Endothelial cell of umbilical vein (primary cell): ENCODE measurements at regions of chr4 and their contacts with region 1.

Region 1: DNA sequence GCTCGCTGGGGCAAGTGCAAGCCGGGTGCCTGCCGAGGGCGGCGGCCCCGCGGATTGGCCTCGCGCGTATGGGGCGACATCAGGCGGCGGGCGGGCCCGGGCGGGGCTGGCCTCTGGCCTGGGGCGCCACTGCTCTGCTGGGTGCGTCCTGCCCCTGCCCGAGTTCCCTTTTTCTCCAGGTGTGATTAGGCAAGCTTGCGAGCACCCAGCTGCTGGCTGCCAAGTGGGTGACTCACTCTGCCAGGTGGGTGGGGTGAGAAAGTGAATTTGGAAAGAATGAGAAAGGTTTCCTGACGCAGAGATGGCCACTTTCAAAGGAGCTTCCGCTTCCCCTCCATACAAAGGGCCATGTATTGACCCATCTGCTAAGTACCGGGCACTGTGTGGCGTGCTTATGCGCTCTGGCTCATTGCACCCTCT is 32.5 kb downstream of the FGFBP1 start:
- DNase-seq: no peak
- H3K4me3 ChIP-seq: no peak overlapping the region
- H3K27ac ChIP-seq: no peak overlapping the region
- H3K4me1 ChIP-seq: no peaks in the 10 kb centered on the region
- H3K27me3 ChIP-seq: no peaks in the 10 kb centered on the region
- CTCF ChIP-seq: no peak
- POLR2A ChIP-seq: no peak

Region 2: DNA sequence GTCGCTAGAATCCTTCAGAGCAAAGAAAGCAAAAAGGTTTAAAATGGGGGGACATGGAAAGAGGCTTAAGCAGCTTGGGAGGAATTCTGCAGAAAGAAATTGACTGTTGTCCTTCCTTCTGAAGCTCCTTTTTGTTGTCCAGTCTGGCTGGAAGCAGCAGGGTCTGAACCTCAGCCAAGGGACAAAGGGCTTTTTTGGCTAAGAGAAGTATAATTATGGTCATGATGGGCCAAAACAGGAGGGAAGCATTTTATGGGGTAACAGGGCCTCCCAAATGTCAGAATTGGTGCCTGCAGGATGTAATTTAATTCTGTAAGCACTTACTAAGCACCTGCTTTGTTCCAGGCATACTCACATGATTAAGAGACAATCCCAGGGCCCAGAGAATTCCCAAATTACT is 978.0 kb before region 1 on chr4:
- CTCF ChIA-PET with region 1: no interaction called
- POLR2A ChIA-PET with region 1: no interaction called
- dilution Hi-C with region 1: no loop called
- intact Hi-C with region 1: no loop called
- DNase-seq: no peak
- H3K4me3 ChIP-seq: no peak overlapping the region
- H3K27ac ChIP-seq: no peak overlapping the region
- H3K4me1 ChIP-seq: no peaks in the 10 kb centered on the region
- H3K27me3 ChIP-seq: no peaks in the 10 kb centered on the region
- CTCF ChIP-seq: no peak
- POLR2A ChIP-seq: no peak

Region 3: DNA sequence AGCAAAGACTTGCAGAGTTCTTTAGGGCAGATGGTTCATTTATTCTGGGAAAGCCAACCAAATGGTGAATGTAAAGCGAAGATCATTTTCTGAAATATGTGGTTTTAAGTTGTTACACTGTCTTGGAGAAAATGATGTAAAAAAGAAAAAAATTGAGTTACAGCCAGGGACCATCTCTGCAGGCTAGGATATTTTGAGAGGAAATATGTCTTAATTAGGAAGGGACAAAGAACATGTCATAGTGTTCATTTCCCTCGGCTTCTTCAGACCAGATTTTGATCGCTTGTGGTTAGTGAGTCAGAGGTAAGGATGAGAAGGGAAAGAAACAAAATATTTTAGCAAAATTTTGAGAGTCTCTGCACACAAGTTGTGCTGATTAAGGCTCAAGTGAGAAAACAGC is 537.2 kb before region 1 on chr4:
- CTCF ChIA-PET with region 1: no interaction called
- POLR2A ChIA-PET with region 1: no interaction called
- dilution Hi-C with region 1: no loop called
- intact Hi-C with region 1: no loop called
- DNase-seq: no peak
- H3K4me3 ChIP-seq: no peak overlapping the region
- H3K27ac ChIP-seq: no peak overlapping the region
- H3K4me1 ChIP-seq: no peaks in the 10 kb centered on the region
- H3K27me3 ChIP-seq: no peaks in the 10 kb centered on the region
- CTCF ChIP-seq: no peak
- POLR2A ChIP-seq: no peak

Region 4: DNA sequence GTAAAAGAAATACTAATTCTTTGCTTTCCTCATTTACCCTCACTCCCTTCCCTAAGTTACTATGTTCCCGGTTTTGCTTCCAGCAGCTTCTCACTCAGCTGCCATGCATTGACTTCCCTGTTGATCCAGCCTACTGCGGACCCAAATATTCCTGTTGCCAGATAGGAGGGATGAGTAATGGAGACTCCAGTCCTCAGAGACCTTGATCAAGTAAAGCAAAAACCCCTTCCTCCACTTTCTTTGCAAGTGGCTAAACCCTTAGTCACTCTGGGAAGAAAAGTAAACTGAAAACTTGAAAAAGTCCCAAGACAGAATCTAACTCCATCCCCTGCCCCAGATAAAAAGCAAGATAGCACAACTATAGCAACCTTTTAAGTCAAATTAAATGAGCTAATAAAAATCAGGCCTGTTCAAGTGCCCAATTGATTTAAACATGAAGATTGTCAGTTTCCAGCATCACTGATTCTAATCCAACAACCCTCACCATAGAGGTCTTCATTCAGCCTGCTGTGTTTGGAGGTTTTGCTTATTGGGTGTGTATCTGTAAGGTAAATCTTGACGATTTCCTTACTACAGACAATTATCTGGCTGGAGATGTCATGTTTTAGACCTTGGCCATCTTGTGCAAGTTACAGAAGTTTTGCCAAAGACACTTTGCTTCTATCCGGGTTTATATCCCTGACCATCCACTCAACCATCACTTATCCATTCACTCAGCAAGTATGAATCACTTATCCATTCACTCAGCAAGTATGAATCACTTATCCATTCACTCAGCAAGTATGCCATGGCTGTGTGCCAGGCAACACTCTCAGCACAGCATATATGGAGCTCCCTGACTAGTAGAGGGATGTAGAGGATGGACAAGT is 14.9 kb after region 1 on chr4:
- CTCF ChIA-PET with region 1: interaction called, 11 read pairs
- POLR2A ChIA-PET with region 1: no interaction called
- dilution Hi-C with region 1: no loop called
- intact Hi-C with region 1: no loop called
- DNase-seq: peak; percentile 89
- H3K4me3 ChIP-seq: no peak overlapping the region
- H3K27ac ChIP-seq: peak overlapping the region; percentile 24
- H3K4me1 ChIP-seq: peaks cover 11% of the 10 kb centered on the region
- H3K27me3 ChIP-seq: no peaks in the 10 kb centered on the region
- CTCF ChIP-seq: no peak
- POLR2A ChIP-seq: no peak